ENCODE measurements at regions of chr18 and their contacts with region 1.

Region 1: DNA sequence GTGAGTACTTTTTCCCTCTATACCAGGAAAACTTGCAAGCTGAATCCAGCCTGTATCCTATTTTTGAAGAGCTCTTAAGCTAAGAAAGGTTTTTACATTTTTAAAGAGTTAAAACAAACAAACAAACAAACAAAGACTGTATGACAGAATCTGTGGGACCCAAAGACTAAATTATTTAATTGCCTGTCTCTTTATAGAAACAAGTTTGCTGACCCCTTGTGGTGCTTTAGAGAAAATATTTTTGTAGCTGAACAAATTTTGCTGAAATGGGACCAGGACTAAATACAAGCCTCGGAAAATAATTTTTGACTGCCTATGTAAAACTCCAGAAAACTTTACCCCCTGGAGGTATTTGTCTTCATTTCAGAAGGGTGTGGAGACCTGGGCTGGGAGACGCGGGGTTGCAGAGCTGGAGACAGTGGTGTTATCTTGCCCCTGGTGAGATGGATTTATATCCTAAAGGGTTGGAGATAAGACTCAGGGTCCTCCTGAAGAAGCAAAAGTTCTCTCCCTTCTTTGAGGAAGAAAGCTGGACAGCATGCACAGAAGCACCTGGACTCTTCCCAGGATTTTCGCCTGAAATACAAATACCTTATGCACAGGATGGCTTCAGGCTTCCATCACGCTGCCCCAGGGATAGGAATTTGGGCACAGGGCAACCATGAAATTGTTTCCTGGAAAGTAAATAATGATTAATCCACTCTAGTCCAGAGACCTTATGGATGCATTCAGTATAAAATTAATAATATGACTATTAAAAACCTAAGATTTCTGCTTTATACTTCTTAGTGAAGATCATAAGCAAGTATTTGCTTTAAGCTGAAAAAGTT is 54.3 kb downstream of the TMX3 start:
- DNase-seq: no peak
- ATAC-seq: peak; percentile 44 to 57 (median 53)
- H3K4me3 ChIP-seq: no peak overlapping the region
- H3K27ac ChIP-seq: no peak overlapping the region
- H3K4me1 ChIP-seq: no peaks in the 10 kb centered on the region
- H3K27me3 ChIP-seq: no peaks in the 10 kb centered on the region
- CTCF ChIP-seq: peak; percentile 55 to 59 (median 58)
- POLR2A ChIP-seq: no peak

Region 2: GRCh38 chr18:67217551-67218166 is 1442.9 kb before region 1 on chr18:
- intact Hi-C with region 1: loop called (anchors 10 kb)
- DNase-seq: peak in 1 of 3 donors; percentile 52
- ATAC-seq: peak; percentile 89 to 94 (median 92)
- H3K4me3 ChIP-seq: no peak overlapping the region
- H3K27ac ChIP-seq: no peak overlapping the region
- H3K4me1 ChIP-seq: no peaks in the 10 kb centered on the region
- H3K27me3 ChIP-seq: no peaks in the 10 kb centered on the region
- CTCF ChIP-seq: peak; percentile 70 to 89 (median 84)
- POLR2A ChIP-seq: no peak

Region 3: DNA sequence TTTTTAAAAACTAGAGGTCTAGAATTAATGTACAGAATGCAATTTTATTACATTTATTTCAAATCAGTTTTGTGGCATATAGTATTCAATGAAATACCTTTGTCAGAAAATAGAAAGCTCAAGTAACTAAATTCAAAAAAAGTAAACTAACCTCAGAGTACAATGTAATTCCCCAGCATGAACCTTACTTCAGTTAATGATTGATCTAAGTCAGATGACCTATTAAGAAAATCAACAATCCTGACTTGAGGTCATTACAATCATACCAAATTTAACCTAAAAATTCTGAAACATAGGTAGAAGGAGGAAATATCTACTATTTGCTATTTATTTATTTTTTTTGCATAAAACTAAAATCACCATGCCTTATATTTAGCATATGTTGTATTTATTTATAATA is 280.2 kb after region 1 on chr18:
- intact Hi-C with region 1: no loop called
- DNase-seq: no peak
- ATAC-seq: peak; percentile 82 to 98 (median 94)
- H3K4me3 ChIP-seq: no peak overlapping the region
- H3K27ac ChIP-seq: peak overlapping the region in 1 of 3 donors; percentile 25
- H3K4me1 ChIP-seq: peaks cover 0 to 10% (median 0%) of the 10 kb centered on the region in 4 donors
- H3K27me3 ChIP-seq: no peaks in the 10 kb centered on the region
- CTCF ChIP-seq: no peak
- POLR2A ChIP-seq: no peak

Measured in right lobe of liver (tissue), 6 donors.